ENCODE measurements at regions of chr6 and their contacts with region 1.

Region 1: DNA sequence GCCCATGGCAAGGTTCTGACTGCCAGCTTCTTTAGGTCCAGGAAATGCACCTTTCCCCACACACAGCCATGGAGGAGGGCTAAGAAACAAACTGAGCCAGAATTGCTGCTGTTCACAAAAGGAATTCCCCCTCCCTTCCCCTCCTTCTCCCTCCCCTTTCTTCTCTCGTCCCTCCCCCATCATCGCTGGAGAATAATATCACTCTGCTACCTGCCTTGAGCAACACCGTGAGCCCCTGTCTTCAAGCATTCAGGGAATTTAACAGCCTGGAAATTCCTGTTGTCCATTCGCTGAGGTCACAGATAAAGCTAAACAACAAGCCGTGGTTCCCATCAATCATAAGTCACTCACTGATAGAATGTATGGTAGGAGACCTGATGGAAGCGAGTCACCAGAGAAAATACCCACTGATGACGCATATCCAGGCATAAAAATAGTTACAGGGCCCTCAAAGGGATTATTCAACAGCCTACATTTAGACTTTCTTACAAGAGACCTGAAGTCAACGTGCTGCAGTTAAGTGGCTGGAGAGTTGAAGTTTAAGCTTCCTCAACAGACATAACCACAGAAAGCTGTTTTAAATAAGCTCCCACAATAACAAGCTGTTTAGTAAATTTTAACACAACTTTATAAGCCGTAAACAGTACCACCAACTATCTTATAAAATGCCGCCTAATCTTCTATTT is 59.7 kb downstream of the HIVEP2 start:
- DNase-seq: peak in 7 of 9 experiments; percentile 13 to 93 (median 45)
- ATAC-seq: peak; percentile 81
- H3K4me3 ChIP-seq: peak overlapping the region; percentile 23 to 33
- H3K4me3 Mint-ChIP-seq: peak overlapping the region; percentile 90
- H3K27ac ChIP-seq: peak overlapping the region; percentile 71
- H3K27ac Mint-ChIP-seq: peak overlapping the region; percentile 99
- H3K4me1 ChIP-seq: peaks cover 70% of the 10 kb centered on the region
- H3K4me1 Mint-ChIP-seq: peaks cover 90% of the 10 kb centered on the region
- H3K27me3 ChIP-seq: no peaks in the 10 kb centered on the region
- H3K27me3 Mint-ChIP-seq: no peaks in the 10 kb centered on the region
- CTCF ChIP-seq: no peak

Region 2: GRCh38 chr6:142303176-142303533 is 582.2 kb before region 1 on chr6:
- CTCF ChIA-PET with region 1: no interaction called
- POLR2A ChIA-PET with region 1: no interaction called
- intact Hi-C with region 1: no loop called
- DNase-seq: no peak
- ATAC-seq: no peak
- H3K4me3 ChIP-seq: no peak overlapping the region
- H3K4me3 Mint-ChIP-seq: peak overlapping the region; percentile 40
- H3K27ac ChIP-seq: no peak overlapping the region
- H3K27ac Mint-ChIP-seq: no peak overlapping the region
- H3K4me1 ChIP-seq: peaks cover 4% of the 10 kb centered on the region
- H3K4me1 Mint-ChIP-seq: peaks cover 15% of the 10 kb centered on the region
- H3K27me3 ChIP-seq: no peaks in the 10 kb centered on the region
- H3K27me3 Mint-ChIP-seq: peaks cover 15% of the 10 kb centered on the region
- CTCF ChIP-seq: no peak

Region 3: DNA sequence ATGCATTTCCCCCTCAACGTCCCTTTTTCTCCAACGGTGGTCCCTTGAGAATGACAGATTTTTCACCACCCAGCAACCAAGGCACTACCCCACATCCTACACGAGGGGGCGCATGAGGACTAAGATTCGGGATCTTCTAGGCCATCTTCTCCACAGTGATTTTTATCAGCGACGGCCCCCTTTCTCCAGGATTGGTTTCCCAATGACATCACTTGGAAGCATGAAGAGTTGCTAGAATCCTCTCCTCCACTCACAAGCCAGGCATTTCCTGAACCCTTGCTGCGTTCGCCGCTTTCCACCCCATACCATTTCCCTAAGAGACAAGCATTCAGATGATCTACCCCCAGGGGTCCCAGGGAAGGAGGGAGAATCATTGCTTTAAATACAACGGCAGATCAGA is 192.4 kb before region 1 on chr6:
- CTCF ChIA-PET with region 1: interaction called, 4 read pairs
- POLR2A ChIA-PET with region 1: interaction called, 3 read pairs
- intact Hi-C with region 1: loop called in 1 of 2 experiments (anchors 5 kb)
- DNase-seq: peak; percentile 47 to 82 (median 71)
- ATAC-seq: peak; percentile 88
- H3K4me3 ChIP-seq: no peak overlapping the region
- H3K4me3 Mint-ChIP-seq: no peak overlapping the region
- H3K27ac ChIP-seq: no peak overlapping the region
- H3K27ac Mint-ChIP-seq: no peak overlapping the region
- H3K4me1 ChIP-seq: peaks cover 4% of the 10 kb centered on the region
- H3K4me1 Mint-ChIP-seq: peaks cover 6% of the 10 kb centered on the region
- H3K27me3 ChIP-seq: no peaks in the 10 kb centered on the region
- H3K27me3 Mint-ChIP-seq: no peaks in the 10 kb centered on the region
- CTCF ChIP-seq: peak; percentile 90

Region 4: DNA sequence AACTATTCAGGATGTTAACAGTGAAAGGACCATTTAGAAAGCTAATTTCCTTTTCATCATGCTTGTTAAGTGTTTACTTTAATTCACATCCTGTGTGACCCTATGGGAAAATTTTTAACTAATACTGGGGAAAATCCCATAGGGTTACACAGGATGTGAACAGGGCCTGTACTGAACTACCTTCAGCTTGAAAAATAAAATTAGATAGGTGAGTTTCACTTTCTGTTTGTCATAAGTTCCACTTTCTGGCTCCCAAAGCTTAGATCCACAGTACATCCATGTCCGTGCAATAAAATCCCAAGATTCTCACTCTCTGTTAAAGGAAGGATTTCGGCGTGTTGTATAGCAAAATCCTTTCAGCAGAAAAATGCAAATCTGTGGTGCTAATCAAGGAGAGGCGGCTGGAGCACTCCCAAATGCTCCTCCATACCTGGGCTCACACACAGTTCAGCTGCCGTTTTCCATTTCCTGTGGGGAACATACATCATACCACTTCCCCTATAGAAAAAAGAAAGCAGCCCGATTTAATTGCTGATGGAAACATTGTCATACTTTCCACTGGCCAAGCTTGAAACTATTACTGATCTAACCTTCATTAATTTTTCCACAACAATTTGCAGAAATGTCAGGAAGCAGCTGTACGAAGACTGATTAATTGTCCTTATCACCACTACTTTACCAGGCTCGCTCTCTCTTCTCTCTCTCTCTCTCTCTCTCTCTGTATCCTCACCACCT is 65.6 kb before region 1 on chr6:
- CTCF ChIA-PET with region 1: interaction called, 3 read pairs
- POLR2A ChIA-PET with region 1: interaction called, 3 read pairs
- intact Hi-C with region 1: loop called in 1 of 2 experiments (anchors 1 kb)
- DNase-seq: peak in 5 of 9 experiments; percentile 29 to 86 (median 47)
- ATAC-seq: peak; percentile 57
- H3K4me3 ChIP-seq: peak overlapping the region; percentile 31 to 48
- H3K4me3 Mint-ChIP-seq: peak overlapping the region; percentile 90
- H3K27ac ChIP-seq: peak overlapping the region; percentile 30 to 78
- H3K27ac Mint-ChIP-seq: peak overlapping the region; percentile 96
- H3K4me1 ChIP-seq: peaks cover 44% of the 10 kb centered on the region
- H3K4me1 Mint-ChIP-seq: peaks cover 76% of the 10 kb centered on the region
- H3K27me3 ChIP-seq: no peaks in the 10 kb centered on the region
- H3K27me3 Mint-ChIP-seq: no peaks in the 10 kb centered on the region
- CTCF ChIP-seq: no peak

Region 5: DNA sequence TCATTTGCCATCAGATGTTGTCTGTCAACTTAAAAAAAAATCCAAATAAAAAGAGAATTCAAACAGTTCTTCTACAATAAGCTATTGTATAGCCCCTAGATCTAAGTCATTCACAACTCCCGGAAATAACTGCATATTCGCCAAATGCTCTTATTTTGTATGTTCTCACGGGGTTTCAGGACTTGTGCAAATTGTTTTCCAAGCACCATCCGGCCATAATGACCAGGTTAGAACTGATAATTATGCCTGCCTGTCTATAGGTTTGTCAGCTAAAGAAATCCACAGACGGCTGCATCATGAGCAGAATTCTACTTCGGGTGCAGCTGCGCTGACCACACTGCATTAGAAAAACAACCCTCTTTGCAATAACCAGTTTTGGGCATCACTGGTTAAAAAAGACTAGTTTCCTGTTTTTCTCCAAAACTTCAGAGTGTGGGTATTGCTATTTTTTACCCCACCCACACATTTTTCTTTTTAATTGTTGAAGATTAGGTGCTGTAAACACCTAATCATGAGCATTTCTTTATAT is 28.0 kb before region 1 on chr6:
- CTCF ChIA-PET with region 1: interaction called, 4 read pairs
- POLR2A ChIA-PET with region 1: interaction called, 6 read pairs
- intact Hi-C with region 1: loop called (anchors 1 kb)
- DNase-seq: peak in 5 of 9 experiments; percentile 27 to 69 (median 56)
- ATAC-seq: peak; percentile 25
- H3K4me3 ChIP-seq: peak overlapping the region; percentile 39 to 48
- H3K4me3 Mint-ChIP-seq: peak overlapping the region; percentile 78
- H3K27ac ChIP-seq: peak overlapping the region; percentile 70 to 77
- H3K27ac Mint-ChIP-seq: peak overlapping the region; percentile 97
- H3K4me1 ChIP-seq: peaks cover 86% of the 10 kb centered on the region
- H3K4me1 Mint-ChIP-seq: peaks cover 88% of the 10 kb centered on the region
- H3K27me3 ChIP-seq: no peaks in the 10 kb centered on the region
- H3K27me3 Mint-ChIP-seq: no peaks in the 10 kb centered on the region
- CTCF ChIP-seq: no peak

Region 6: DNA sequence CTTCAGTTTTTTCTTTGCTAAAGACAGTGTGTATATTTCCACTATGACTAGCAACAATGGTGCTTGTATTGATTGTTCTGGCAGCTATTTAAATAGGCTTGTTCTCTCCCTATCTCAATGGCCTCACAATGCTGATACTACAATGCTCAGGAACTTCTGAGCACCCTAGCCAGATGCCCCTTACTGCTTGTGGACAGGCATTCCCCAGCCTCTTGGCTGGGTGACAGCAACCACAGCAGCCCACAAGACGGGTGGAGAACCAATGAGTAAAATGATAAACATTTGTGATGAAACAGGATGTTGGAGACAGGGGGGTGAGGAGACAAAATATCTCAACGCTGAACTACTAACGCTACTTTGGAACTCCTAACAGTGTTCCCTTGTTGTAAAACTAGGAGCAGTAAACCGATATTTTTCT is 17.3 kb after region 1 on chr6:
- CTCF ChIA-PET with region 1: no interaction called
- POLR2A ChIA-PET with region 1: interaction called, 11 read pairs
- intact Hi-C with region 1: loop called (anchors 1 kb)
- DNase-seq: peak; percentile 53 to 95 (median 81)
- ATAC-seq: peak; percentile 58
- H3K4me3 ChIP-seq: peak overlapping the region; percentile 1 to 33
- H3K4me3 Mint-ChIP-seq: peak overlapping the region; percentile 70
- H3K27ac ChIP-seq: peak overlapping the region; percentile 82 to 87
- H3K27ac Mint-ChIP-seq: peak overlapping the region; percentile 98
- H3K4me1 ChIP-seq: peaks cover 91% of the 10 kb centered on the region
- H3K4me1 Mint-ChIP-seq: peaks cover 63% of the 10 kb centered on the region
- H3K27me3 ChIP-seq: no peaks in the 10 kb centered on the region
- H3K27me3 Mint-ChIP-seq: no peaks in the 10 kb centered on the region
- CTCF ChIP-seq: no peak

Region 7: GRCh38 chr6:142946181-142946923 is 61.0 kb after region 1 on chr6:
- CTCF ChIA-PET with region 1: interaction called, 3 read pairs
- POLR2A ChIA-PET with region 1: interaction called, 13 read pairs
- intact Hi-C with region 1: loop called (anchors 1 kb)
- DNase-seq: peak; percentile 79 to 98 (median 90)
- ATAC-seq: peak; percentile 41
- H3K4me3 ChIP-seq: peak overlapping the region; percentile 73 to 95
- H3K4me3 Mint-ChIP-seq: peak overlapping the region; percentile 99
- H3K27ac ChIP-seq: peak overlapping the region; percentile 96 to 97
- H3K27ac Mint-ChIP-seq: peak overlapping the region; percentile 96
- H3K4me1 ChIP-seq: peaks cover 27% of the 10 kb centered on the region
- H3K4me1 Mint-ChIP-seq: peaks cover 36% of the 10 kb centered on the region
- H3K27me3 ChIP-seq: no peaks in the 10 kb centered on the region
- H3K27me3 Mint-ChIP-seq: no peaks in the 10 kb centered on the region
- CTCF ChIP-seq: no peak

Region 8: GRCh38 chr6:144377586-144378210 is 1492.4 kb after region 1 on chr6:
- CTCF ChIA-PET with region 1: no interaction called
- POLR2A ChIA-PET with region 1: no interaction called
- intact Hi-C with region 1: no loop called
- DNase-seq: no peak
- ATAC-seq: peak; percentile 44
- H3K4me3 ChIP-seq: no peak overlapping the region
- H3K4me3 Mint-ChIP-seq: no peak overlapping the region
- H3K27ac ChIP-seq: no peak overlapping the region
- H3K27ac Mint-ChIP-seq: peak overlapping the region; percentile 6
- H3K4me1 ChIP-seq: peaks cover 18% of the 10 kb centered on the region
- H3K4me1 Mint-ChIP-seq: peaks cover 67% of the 10 kb centered on the region
- H3K27me3 ChIP-seq: no peaks in the 10 kb centered on the region
- H3K27me3 Mint-ChIP-seq: no peaks in the 10 kb centered on the region
- CTCF ChIP-seq: no peak